ENCODE measurements at regions of chr6 and their contacts with region 1.

Region 1: DNA sequence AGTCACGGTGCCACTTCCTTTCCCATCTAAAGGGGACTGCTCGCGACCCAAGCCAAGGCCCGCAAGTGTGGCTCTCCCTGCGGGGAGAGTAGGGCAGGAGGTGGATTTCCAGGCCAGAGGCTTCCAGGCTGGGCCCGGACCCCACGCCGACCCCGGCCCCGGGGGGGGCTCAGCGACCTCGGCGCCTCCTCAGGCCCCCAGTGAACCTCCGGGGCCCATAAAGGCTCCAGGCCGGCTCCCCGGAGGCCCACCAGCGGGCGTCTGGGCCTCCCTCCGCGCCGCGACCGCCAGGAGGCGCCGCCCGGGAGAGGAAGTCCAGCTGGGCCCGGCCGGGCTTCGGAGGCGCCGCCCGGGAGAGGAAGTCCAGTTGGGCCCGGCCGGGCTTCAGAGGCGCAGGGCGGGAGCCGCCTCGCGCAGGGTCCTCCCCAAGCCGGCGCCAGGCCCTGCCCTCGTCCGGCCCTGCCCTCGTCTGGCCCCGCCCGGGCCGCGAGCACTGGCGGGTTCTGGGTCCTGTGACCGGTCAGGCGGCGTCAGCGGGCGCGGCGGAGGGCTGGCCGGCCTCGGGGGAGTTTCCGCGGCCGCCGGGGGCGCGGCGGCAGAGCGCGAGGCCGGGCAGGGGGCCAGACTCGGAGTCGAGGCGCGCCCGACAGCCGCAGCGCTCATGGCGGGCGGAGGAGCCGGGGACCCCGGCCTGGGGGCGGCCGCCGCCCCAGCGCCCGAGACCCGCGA is at the start of gene RAB32:
- DNase-seq: peak; percentile 97 to 99 (median 98)
- ATAC-seq: peak; percentile 100
- H3K4me3 ChIP-seq: peak within 1 kb of the TSS; percentile 88
- H3K27ac ChIP-seq: peak within 1 kb of the TSS; percentile 98
- H3K4me1 ChIP-seq: no peaks in the 10 kb centered on the region
- H3K27me3 ChIP-seq: no peaks in the 10 kb centered on the region
- total RNA-seq, gene RAB32: 8.4 to 17.4 (median 12.1) TPM

Region 2: DNA sequence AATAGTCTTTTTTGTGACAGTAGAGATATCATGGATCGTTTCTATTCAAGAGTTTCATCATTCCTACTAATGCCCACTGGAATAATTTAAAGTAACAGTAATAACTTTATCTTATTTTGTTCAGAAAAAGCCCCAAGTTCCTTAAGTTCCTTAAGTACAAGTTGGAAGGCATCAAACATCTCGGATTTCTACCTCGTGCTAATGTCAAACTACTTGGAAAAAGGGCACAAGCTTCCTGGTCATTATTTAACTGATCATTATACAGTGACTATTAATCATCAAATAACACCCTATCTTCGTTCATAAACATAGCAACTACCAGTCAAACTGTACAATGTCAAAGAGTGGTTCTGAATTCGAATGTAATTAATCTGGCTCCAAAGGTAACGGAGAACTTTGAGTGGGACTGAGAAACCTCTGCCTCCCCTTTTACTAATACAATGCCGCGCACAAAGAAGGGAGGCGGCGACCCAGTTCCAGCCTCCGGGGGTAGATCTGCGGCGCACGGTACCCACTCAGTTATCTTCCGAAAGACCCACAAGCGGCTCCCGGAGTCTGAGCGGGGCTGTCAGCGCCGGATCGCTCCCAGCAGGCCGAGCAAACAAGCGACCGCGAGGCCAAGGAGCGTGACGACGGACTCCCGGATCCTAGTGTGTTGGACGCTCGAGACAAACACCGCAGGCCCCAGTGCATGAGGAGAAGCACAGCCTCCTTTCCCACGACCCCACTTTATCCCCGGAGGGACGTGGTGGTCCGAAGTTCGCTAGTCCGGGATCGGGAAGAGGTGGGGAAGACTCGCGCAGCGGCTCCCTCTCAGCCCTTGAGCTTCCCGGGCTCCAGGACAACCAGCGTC is 579.9 kb before region 1 on chr6:
- intact Hi-C with region 1: loop called in 1 of 4 experiments (anchors 10 kb)
- DNase-seq: peak; percentile 47 to 82 (median 79)
- ATAC-seq: peak; percentile 46 to 55
- H3K4me3 ChIP-seq: peak overlapping the region; percentile 64
- H3K27ac ChIP-seq: peak overlapping the region; percentile 61
- H3K4me1 ChIP-seq: peaks cover 4% of the 10 kb centered on the region
- H3K27me3 ChIP-seq: no peaks in the 10 kb centered on the region